Endothelial cell of umbilical vein (primary cell): ENCODE measurements at regions of chr7 and their contacts with region 1.

Region 1: GRCh38 chr7:157016352-157017041 is 6.0 kb upstream of the MNX1 start:
- DNase-seq: no peak
- H3K4me3 ChIP-seq: no peak overlapping the region
- H3K27ac ChIP-seq: no peak overlapping the region
- H3K4me1 ChIP-seq: no peaks in the 10 kb centered on the region
- H3K27me3 ChIP-seq: peaks cover 95 to 100% of the 10 kb centered on the region in 2 experiments
- CTCF ChIP-seq: no peak
- POLR2A ChIP-seq: no peak

Region 2: DNA sequence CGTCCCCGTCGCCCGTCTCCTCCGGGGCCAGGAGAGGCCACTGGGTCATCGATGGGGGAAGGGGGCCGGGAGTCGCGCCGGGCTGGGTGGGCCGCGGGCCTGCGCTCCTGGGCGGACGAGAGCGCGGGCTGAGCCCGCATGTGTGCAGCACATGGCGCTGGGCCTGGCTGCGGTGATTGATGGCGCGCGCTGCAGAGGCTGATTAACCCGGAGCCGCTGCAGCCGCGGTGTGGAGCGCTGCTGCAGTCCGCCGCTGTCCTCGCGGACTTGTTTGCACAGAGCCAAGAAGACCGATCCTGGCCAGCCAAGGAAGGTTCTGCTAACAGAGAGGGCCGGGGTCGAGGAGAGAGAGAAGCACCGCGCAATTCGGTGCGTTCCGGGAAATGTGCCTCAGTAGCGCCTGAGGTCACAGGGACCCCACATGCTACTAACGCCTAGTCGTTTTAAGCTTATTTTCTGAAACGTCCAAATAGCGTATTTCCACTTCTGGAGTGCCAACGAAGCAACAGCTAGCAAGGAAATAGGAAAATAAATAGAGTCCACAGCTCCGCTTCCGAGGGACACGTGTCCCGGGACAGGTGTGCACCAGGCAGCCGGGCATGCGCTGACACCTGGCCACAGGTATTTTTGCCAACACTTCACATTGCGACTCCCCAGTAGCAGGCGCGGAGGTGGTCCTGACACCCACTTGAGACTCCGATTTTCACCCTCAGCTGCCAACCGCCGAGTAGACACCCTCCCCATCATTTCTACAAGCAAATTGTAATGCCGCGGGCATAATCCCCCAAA is 12.3 kb before region 1 on chr7:
- CTCF ChIA-PET with region 1: no interaction called
- POLR2A ChIA-PET with region 1: no interaction called
- dilution Hi-C with region 1: no loop called
- intact Hi-C with region 1: loop called (anchors 2 kb)
- DNase-seq: peak; percentile 39
- H3K4me3 ChIP-seq: no peak overlapping the region
- H3K27ac ChIP-seq: no peak overlapping the region
- H3K4me1 ChIP-seq: peaks cover 8% of the 10 kb centered on the region
- H3K27me3 ChIP-seq: peaks cover 75 to 98% of the 10 kb centered on the region in 2 experiments
- CTCF ChIP-seq: no peak
- POLR2A ChIP-seq: no peak